B cell (primary cell): ENCODE measurements at regions of chr1 and their contacts with region 1.

Region 1: DNA sequence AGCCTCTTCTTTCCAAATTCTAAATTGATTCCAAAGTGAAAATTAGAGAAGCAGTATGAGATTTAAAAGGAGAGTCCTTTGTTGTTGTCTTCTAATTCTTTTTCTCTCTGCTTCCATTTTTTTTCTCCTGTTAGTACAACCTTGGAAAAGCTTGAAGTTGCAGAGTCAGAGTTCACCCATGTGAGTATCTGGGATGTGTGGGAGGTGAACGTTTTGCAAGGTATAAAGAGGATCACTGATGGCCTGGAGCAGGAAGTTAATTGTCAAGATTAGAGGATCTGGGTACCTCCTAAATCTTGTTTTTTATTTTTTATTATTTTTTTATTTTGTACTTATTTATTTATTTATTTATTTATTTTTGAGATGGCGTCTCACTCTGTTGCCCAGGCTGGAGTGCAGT is 7.7 kb upstream of the PSMD4 start:
- DNase-seq: no peak
- ATAC-seq: no peak
- H3K4me3 ChIP-seq: no peak overlapping the region
- H3K4me3 Mint-ChIP-seq: no peak overlapping the region
- H3K27ac ChIP-seq: no peak overlapping the region
- H3K27ac Mint-ChIP-seq: no peak overlapping the region
- H3K4me1 ChIP-seq: no peaks in the 10 kb centered on the region
- H3K4me1 Mint-ChIP-seq: peaks cover 2% of the 10 kb centered on the region
- H3K27me3 ChIP-seq: no peaks in the 10 kb centered on the region
- H3K27me3 Mint-ChIP-seq: no peaks in the 10 kb centered on the region
- CTCF ChIP-seq: no peak

Region 2: DNA sequence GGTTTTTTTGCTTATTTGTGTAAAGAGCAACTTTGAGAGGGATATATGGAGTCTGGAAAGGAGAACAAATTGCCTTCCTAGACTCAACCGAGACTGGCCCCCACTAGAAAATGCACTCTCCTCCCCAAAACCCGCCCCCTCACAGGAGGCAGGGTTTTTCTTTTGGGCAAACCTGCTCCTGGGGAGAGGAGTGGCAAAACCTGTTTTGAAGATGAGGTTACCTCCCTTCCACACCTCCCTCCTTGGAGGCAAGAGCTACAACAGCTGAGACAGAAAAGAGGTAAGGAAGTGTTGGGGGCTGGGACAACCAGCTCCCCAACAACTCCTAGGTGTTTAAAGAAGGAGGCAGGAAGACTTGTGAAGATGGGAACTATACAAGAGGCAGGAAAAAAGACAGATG is 210.4 kb before region 1 on chr1 and contains the start of gene BNIPL:
- CTCF ChIA-PET with region 1: no interaction called
- POLR2A ChIA-PET with region 1: interaction called, 10 read pairs
- intact Hi-C with region 1: no loop called
- DNase-seq: no peak
- ATAC-seq: no peak
- H3K4me3 ChIP-seq: no peak within 1 kb of the TSS
- H3K4me3 Mint-ChIP-seq: no peak within 1 kb of the TSS
- H3K27ac ChIP-seq: no peak within 1 kb of the TSS
- H3K27ac Mint-ChIP-seq: no peak within 1 kb of the TSS
- H3K4me1 ChIP-seq: no peaks in the 10 kb centered on the region
- H3K4me1 Mint-ChIP-seq: no peaks in the 10 kb centered on the region
- H3K27me3 ChIP-seq: no peaks in the 10 kb centered on the region
- H3K27me3 Mint-ChIP-seq: no peaks in the 10 kb centered on the region
- CTCF ChIP-seq: no peak
- total RNA-seq, gene BNIPL: 1.8 and 2.5 TPM in 2 replicates

Region 3: GRCh38 chr1:151113877-151114276 is 132.9 kb before region 1 on chr1:
- CTCF ChIA-PET with region 1: no interaction called
- POLR2A ChIA-PET with region 1: no interaction called
- intact Hi-C with region 1: no loop called
- DNase-seq: no peak
- ATAC-seq: no peak
- H3K4me3 ChIP-seq: no peak overlapping the region
- H3K4me3 Mint-ChIP-seq: no peak overlapping the region
- H3K27ac ChIP-seq: no peak overlapping the region
- H3K27ac Mint-ChIP-seq: no peak overlapping the region
- H3K4me1 ChIP-seq: no peaks in the 10 kb centered on the region
- H3K4me1 Mint-ChIP-seq: no peaks in the 10 kb centered on the region
- H3K27me3 ChIP-seq: no peaks in the 10 kb centered on the region
- H3K27me3 Mint-ChIP-seq: no peaks in the 10 kb centered on the region
- CTCF ChIP-seq: no peak